Ascending aorta (tissue), 2 donors: ENCODE measurements at regions of chr10 and their contacts with region 1.

Region 1: DNA sequence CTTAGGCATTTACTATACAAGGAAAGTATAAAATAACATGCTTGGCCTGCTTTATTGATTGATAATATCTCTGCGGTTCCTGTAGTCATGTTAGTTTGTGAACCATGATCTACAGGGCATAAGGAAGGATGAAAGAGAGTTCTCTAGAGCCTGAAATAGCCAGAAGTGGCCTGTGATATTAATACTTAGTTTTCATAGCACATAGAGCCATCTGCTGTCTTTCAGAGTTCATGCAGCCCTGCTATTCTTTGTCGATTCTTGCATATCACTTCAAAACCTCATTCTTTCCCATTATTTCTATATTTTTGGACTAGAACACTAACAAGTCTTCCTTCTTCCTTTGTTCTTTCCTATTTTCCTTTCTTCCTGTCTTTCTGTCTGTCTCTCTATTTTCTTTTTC is 26.4 kb upstream of the PRKG1 start:
- DNase-seq: no peak
- H3K4me3 ChIP-seq: no peak overlapping the region
- H3K27ac ChIP-seq: peak overlapping the region; percentile 68 to 83
- H3K4me1 ChIP-seq: peaks cover 4 to 30% of the 10 kb centered on the region in 2 donors
- H3K27me3 ChIP-seq: no peaks in the 10 kb centered on the region
- CTCF ChIP-seq: peak in 1 of 3 experiments; percentile 24

Region 2: DNA sequence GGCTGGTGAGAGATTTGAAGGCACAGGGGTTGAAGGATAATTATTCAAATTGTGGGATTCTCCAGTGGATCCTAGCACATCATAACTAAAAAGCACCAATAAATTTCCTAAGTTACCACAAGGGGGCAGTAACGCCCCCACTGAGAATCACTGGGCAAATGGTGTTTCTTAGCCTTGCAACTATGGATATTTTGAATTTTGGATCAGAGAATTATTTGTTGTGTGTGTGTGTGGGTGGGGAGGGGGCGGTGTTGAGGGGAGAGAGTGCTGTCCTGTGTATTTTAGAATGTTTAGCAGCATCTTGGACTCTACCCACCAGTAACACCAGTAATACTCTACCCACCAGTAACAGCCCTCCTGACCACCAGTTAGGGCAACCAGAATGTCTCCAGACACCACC is 36.9 kb before region 1 on chr10:
- intact Hi-C with region 1: loop called (anchors 2 kb)
- DNase-seq: no peak
- H3K4me3 ChIP-seq: no peak overlapping the region
- H3K27ac ChIP-seq: peak overlapping the region in 1 of 2 donors; percentile 5
- H3K4me1 ChIP-seq: peaks cover 11 to 37% of the 10 kb centered on the region in 2 donors
- H3K27me3 ChIP-seq: no peaks in the 10 kb centered on the region
- CTCF ChIP-seq: peak; percentile 71 to 80 (median 75)